Natural killer cell (primary cell): ENCODE measurements at regions of chr5 and their contacts with region 1.

Region 1: DNA sequence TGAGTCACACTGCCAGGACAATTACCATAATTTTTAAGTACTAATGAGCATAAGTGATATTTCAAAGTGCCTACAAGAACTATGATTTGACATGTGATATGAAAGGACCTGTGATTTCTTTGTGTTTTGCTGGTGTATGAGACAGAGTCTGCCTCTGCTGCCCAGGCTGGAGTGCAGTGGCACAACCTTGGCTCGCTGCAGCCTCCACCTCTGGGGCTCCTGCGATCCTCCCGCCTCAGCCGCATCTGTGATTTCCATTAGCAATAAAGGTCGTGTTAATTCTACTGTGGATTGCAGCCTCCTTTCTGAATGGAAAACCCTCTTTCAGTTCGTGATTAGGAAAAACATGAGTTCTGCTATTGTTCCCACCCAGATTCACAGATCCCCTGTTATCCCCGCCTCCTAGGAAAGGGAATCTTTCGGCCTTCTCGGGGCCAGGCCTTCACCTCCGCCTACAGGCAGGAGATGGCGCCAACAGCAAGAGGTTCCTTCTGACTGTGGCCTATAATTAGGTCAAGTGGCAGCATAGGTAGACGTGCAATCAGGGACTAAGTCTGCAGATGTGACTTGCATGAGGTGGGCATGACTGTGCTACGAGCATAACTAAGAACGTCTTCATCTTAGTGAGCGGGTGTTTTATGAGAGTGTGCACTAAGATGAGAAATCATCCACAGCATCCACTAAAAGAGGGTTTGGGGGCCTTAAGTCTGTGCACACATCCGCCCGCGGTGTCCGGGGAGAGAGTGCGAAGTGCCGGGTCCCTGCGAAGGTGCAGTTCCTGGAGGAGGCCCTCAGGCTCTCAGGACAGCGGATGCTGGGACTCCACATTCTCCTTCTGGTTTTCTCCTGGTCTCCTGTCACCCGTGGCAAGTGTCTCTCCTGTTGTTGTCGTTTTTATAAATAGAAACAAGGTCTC is 23.1 kb downstream of the TRIM7 start:
- DNase-seq: peak; percentile 51 to 87
- ATAC-seq: peak; percentile 73 to 75 (median 74)
- H3K4me3 ChIP-seq: no peak overlapping the region
- H3K4me3 Mint-ChIP-seq: peak overlapping the region; percentile 83
- H3K27ac ChIP-seq: no peak overlapping the region
- H3K27ac Mint-ChIP-seq: peak overlapping the region; percentile 79 to 87
- H3K4me1 ChIP-seq: peaks cover 37% of the 10 kb centered on the region
- H3K4me1 Mint-ChIP-seq: peaks cover 22 to 31% of the 10 kb centered on the region in 2 donors
- H3K27me3 ChIP-seq: no peaks in the 10 kb centered on the region
- H3K27me3 Mint-ChIP-seq: peaks cover 0 to 7% of the 10 kb centered on the region in 2 donors
- CTCF ChIP-seq: peak; percentile 72

Region 2: GRCh38 chr5:180810210-180810958 is 371.5 kb before region 1 on chr5:
- intact Hi-C with region 1: loop called (anchors 10 kb)
- DNase-seq: peak; percentile 95 to 98
- ATAC-seq: peak; percentile 80 to 91 (median 81)
- H3K4me3 ChIP-seq: peak overlapping the region; percentile 76
- H3K4me3 Mint-ChIP-seq: peak overlapping the region; percentile 72
- H3K27ac ChIP-seq: peak overlapping the region; percentile 97
- H3K27ac Mint-ChIP-seq: peak overlapping the region; percentile 83 to 96
- H3K4me1 ChIP-seq: peaks cover 54% of the 10 kb centered on the region
- H3K4me1 Mint-ChIP-seq: peaks cover 54 to 58% of the 10 kb centered on the region in 2 donors
- H3K27me3 ChIP-seq: no peaks in the 10 kb centered on the region
- H3K27me3 Mint-ChIP-seq: peaks cover 0 to 4% of the 10 kb centered on the region in 2 donors
- CTCF ChIP-seq: no peak

Region 3: GRCh38 chr5:181069767-181070491 is 112.0 kb before region 1 on chr5:
- intact Hi-C with region 1: no loop called
- DNase-seq: no peak
- ATAC-seq: no peak
- H3K4me3 ChIP-seq: no peak overlapping the region
- H3K4me3 Mint-ChIP-seq: no peak overlapping the region
- H3K27ac ChIP-seq: no peak overlapping the region
- H3K27ac Mint-ChIP-seq: no peak overlapping the region
- H3K4me1 ChIP-seq: no peaks in the 10 kb centered on the region
- H3K4me1 Mint-ChIP-seq: no peaks in the 10 kb centered on the region
- H3K27me3 ChIP-seq: peaks cover 19% of the 10 kb centered on the region
- H3K27me3 Mint-ChIP-seq: peaks cover 31 to 56% of the 10 kb centered on the region in 2 donors
- CTCF ChIP-seq: no peak

Region 4: GRCh38 chr5:181100121-181101015 is 81.5 kb before region 1 on chr5:
- intact Hi-C with region 1: loop called (anchors 5 kb)
- DNase-seq: no peak
- ATAC-seq: no peak
- H3K4me3 ChIP-seq: no peak overlapping the region
- H3K4me3 Mint-ChIP-seq: no peak overlapping the region
- H3K27ac ChIP-seq: no peak overlapping the region
- H3K27ac Mint-ChIP-seq: no peak overlapping the region
- H3K4me1 ChIP-seq: no peaks in the 10 kb centered on the region
- H3K4me1 Mint-ChIP-seq: peaks cover 6 to 8% of the 10 kb centered on the region in 2 donors
- H3K27me3 ChIP-seq: peaks cover 14% of the 10 kb centered on the region
- H3K27me3 Mint-ChIP-seq: peaks cover 25 to 30% of the 10 kb centered on the region in 2 donors
- CTCF ChIP-seq: no peak